Heart left ventricle (tissue), 16 donors: ENCODE measurements at regions of chr18 and their contacts with region 1.

Region 1: GRCh38 chr18:62131301-62131909 is 55.5 kb downstream of the PIGN start:
- DNase-seq: peak in 4 of 5 donors; percentile 30 to 53 (median 40)
- ATAC-seq: peak in 3 of 4 donors; percentile 50 to 71 (median 64)
- H3K4me3 ChIP-seq: no peak overlapping the region
- H3K27ac ChIP-seq: no peak overlapping the region
- H3K4me1 ChIP-seq: no peaks in the 10 kb centered on the region
- H3K27me3 ChIP-seq: no peaks in the 10 kb centered on the region
- CTCF ChIP-seq: peak; percentile 81 to 98 (median 94)
- POLR2A ChIP-seq: no peak

Region 2: GRCh38 chr18:60684843-60685513 is 1446.4 kb before region 1 on chr18:
- intact Hi-C with region 1: loop called in 1 of 10 experiments (anchors 10 kb)
- DNase-seq: peak in 1 of 5 donors; percentile 46
- ATAC-seq: no peak
- H3K4me3 ChIP-seq: no peak overlapping the region
- H3K27ac ChIP-seq: no peak overlapping the region
- H3K4me1 ChIP-seq: no peaks in the 10 kb centered on the region
- H3K27me3 ChIP-seq: peaks cover 0 to 3% (median 0%) of the 10 kb centered on the region in 9 donors
- CTCF ChIP-seq: peak; percentile 48 to 79 (median 65)
- POLR2A ChIP-seq: no peak

Region 3: DNA sequence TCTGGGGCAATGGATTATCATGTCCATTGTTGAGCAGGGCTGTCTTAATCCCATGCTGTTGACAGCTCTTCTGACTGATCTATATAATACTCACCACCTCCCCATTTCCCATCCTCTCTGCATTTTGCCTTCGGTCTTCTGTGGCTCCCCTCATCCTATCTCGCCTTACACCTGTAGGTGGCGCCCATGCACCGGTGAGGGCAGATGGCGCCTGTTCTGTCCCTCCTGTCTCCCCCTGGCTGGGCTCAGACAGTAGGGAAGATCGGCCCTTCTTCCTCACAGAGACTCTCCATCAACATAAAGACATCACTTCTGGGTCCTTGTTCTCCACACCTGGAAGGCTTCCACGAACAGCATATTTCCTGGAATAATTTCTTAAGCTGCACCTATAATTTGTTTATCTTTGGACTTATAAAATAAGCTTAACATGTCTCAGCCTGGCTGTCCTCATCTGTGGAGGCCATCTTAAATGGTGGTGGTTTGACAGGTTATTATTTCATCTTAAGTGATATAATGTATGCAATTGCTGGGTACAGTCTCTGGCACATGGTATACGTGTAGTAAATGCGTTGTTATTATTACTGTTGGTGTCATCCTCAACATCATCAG is 809.0 kb before region 1 on chr18:
- intact Hi-C with region 1: loop called in 6 of 10 experiments (anchors 2 to 10 kb)
- DNase-seq: peak; percentile 35 to 73 (median 38)
- ATAC-seq: peak; percentile 67 to 86 (median 80)
- H3K4me3 ChIP-seq: no peak overlapping the region
- H3K27ac ChIP-seq: no peak overlapping the region
- H3K4me1 ChIP-seq: no peaks in the 10 kb centered on the region
- H3K27me3 ChIP-seq: peaks cover 0 to 4% (median 0%) of the 10 kb centered on the region in 9 donors
- CTCF ChIP-seq: peak; percentile 35 to 81 (median 61)
- POLR2A ChIP-seq: no peak

Region 4: GRCh38 chr18:61551586-61551985 is 579.8 kb before region 1 on chr18:
- intact Hi-C with region 1: loop called (anchors 1 to 10 kb)
- DNase-seq: peak in 2 of 5 donors; percentile 47 to 56
- ATAC-seq: peak; percentile 78 to 85 (median 80)
- H3K4me3 ChIP-seq: no peak overlapping the region
- H3K27ac ChIP-seq: no peak overlapping the region
- H3K4me1 ChIP-seq: peaks cover 0 to 8% (median 0%) of the 10 kb centered on the region in 12 donors
- H3K27me3 ChIP-seq: no peaks in the 10 kb centered on the region
- CTCF ChIP-seq: peak; percentile 72 to 92 (median 88)
- POLR2A ChIP-seq: no peak

Region 5: GRCh38 chr18:61635901-61636528 is 495.4 kb before region 1 on chr18:
- intact Hi-C with region 1: loop called in 8 of 10 experiments (anchors 2 to 10 kb)
- DNase-seq: peak; percentile 35 to 64 (median 50)
- ATAC-seq: peak; percentile 51 to 87 (median 80)
- H3K4me3 ChIP-seq: no peak overlapping the region
- H3K27ac ChIP-seq: peak overlapping the region in 10 of 12 donors; percentile 8 to 73 (median 36)
- H3K4me1 ChIP-seq: peaks cover 0 to 14% (median 6%) of the 10 kb centered on the region in 12 donors
- H3K27me3 ChIP-seq: no peaks in the 10 kb centered on the region
- CTCF ChIP-seq: peak; percentile 74 to 93 (median 87)
- POLR2A ChIP-seq: no peak

Region 6: GRCh38 chr18:61908661-61909060 is 222.7 kb before region 1 on chr18:
- intact Hi-C with region 1: loop called in 5 of 10 experiments (anchors 5 to 10 kb)
- DNase-seq: no peak
- ATAC-seq: no peak
- H3K4me3 ChIP-seq: no peak overlapping the region
- H3K27ac ChIP-seq: no peak overlapping the region
- H3K4me1 ChIP-seq: no peaks in the 10 kb centered on the region
- H3K27me3 ChIP-seq: peaks cover 0 to 6% (median 0%) of the 10 kb centered on the region in 9 donors
- CTCF ChIP-seq: no peak
- POLR2A ChIP-seq: no peak

Region 7: DNA sequence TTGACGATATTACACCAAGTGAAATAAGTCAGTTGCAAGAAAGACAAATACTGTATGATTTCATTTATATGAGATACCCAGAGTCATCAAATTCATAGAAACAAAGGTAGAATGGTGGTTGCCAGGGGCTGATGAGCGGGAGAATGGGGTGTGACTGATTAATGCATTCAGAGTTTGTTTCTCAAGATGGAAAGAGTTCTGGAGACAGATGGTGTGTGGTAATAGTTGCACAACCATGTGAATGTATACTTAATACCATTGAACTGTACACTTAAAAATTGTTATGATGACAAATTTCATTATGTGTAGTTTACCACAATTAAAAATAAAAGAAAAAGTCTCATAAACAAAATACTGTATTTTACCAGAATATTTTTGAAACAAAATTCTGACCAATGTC is 61.8 kb before region 1 on chr18:
- intact Hi-C with region 1: no loop called
- DNase-seq: no peak
- ATAC-seq: no peak
- H3K4me3 ChIP-seq: no peak overlapping the region
- H3K27ac ChIP-seq: no peak overlapping the region
- H3K4me1 ChIP-seq: no peaks in the 10 kb centered on the region
- H3K27me3 ChIP-seq: no peaks in the 10 kb centered on the region
- CTCF ChIP-seq: no peak
- POLR2A ChIP-seq: no peak

Region 8: GRCh38 chr18:62102221-62102620 is 29.2 kb before region 1 on chr18:
- intact Hi-C with region 1: no loop called
- DNase-seq: no peak
- ATAC-seq: no peak
- H3K4me3 ChIP-seq: no peak overlapping the region
- H3K27ac ChIP-seq: no peak overlapping the region
- H3K4me1 ChIP-seq: no peaks in the 10 kb centered on the region
- H3K27me3 ChIP-seq: no peaks in the 10 kb centered on the region
- CTCF ChIP-seq: no peak
- POLR2A ChIP-seq: no peak